WTC11 (cell line): ENCODE measurements at regions of chr15 and their contacts with region 1.

Region 1: GRCh38 chr15:88664151-88664778 is 25.4 kb downstream of the ISG20 start:
- DNase-seq: no peak
- ATAC-seq: peak; percentile 89
- H3K4me3 Mint-ChIP-seq: no peak overlapping the region
- H3K27ac Mint-ChIP-seq: no peak overlapping the region
- H3K4me1 Mint-ChIP-seq: no peaks in the 10 kb centered on the region
- H3K27me3 Mint-ChIP-seq: no peaks in the 10 kb centered on the region
- CTCF ChIP-seq: no peak

Region 2: GRCh38 chr15:88624156-88624970 is 39.9 kb before region 1 on chr15:
- CTCF ChIA-PET with region 1: interaction called, 10 read pairs
- POLR2A ChIA-PET with region 1: no interaction called
- DNase-seq: no peak
- ATAC-seq: peak; percentile 25
- H3K4me3 Mint-ChIP-seq: peak overlapping the region; percentile 79
- H3K27ac Mint-ChIP-seq: peak overlapping the region; percentile 85
- H3K4me1 Mint-ChIP-seq: peaks cover 69% of the 10 kb centered on the region
- H3K27me3 Mint-ChIP-seq: no peaks in the 10 kb centered on the region
- CTCF ChIP-seq: no peak

Region 3: GRCh38 chr15:88680241-88681001 is 16.2 kb after region 1 on chr15:
- CTCF ChIA-PET with region 1: no interaction called
- POLR2A ChIA-PET with region 1: no interaction called
- DNase-seq: no peak
- ATAC-seq: no peak; the same call in none of the 2 replicates
- H3K4me3 Mint-ChIP-seq: no peak overlapping the region
- H3K27ac Mint-ChIP-seq: no peak overlapping the region
- H3K4me1 Mint-ChIP-seq: no peaks in the 10 kb centered on the region
- H3K27me3 Mint-ChIP-seq: peaks cover 11% of the 10 kb centered on the region
- CTCF ChIP-seq: no peak

Region 4: GRCh38 chr15:88849376-88850072 is 185.3 kb after region 1 on chr15:
- CTCF ChIA-PET with region 1: no interaction called
- POLR2A ChIA-PET with region 1: no interaction called
- DNase-seq: no peak
- ATAC-seq: no peak
- H3K4me3 Mint-ChIP-seq: no peak overlapping the region
- H3K27ac Mint-ChIP-seq: peak overlapping the region; percentile 20; the same call in 1 of the 2 replicates
- H3K4me1 Mint-ChIP-seq: no peaks in the 10 kb centered on the region
- H3K27me3 Mint-ChIP-seq: peaks cover 2% of the 10 kb centered on the region
- CTCF ChIP-seq: no peak